ENCODE measurements at regions of chr9 and their contacts with region 1.

Region 1: DNA sequence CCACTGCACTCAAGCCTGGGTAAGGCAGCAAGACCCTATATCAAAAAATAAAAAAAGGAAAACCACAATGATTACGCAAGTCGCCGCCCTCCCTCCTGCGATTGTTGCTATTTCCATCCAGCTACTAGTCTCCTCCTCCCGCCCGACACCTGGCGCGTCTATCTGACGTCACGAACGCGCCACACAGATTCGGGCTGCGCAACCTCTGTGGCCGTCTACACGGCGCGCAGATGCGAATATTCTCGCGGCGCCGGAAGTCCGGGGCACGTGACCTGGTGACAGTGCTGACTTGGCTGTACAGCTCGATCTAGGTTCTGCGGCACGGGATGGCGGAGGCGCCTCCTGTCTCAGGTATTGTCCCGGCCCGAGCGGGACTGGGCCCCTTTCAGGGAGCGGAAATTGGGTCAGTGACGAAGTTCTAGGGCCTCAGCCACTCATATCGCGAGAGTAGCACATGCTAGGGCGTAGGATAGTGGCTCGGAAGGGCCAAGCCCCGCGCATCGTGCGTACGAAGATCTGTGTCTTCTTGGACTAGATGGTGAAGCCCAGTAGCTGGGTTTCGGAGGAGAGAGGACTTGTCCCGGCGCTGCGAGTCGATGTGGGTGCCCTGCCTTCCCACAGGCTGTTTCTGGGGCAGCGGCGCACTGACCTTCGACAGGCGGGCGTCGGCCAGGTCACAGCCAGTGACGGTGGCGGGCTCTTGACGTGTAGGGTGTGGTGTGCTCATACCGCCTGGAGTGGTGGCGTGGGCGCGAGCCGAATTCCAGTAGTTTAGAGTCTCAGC is at the start of gene NFX1:
- DNase-seq: peak; percentile 95
- CTCF ChIP-seq: no peak

Region 2: DNA sequence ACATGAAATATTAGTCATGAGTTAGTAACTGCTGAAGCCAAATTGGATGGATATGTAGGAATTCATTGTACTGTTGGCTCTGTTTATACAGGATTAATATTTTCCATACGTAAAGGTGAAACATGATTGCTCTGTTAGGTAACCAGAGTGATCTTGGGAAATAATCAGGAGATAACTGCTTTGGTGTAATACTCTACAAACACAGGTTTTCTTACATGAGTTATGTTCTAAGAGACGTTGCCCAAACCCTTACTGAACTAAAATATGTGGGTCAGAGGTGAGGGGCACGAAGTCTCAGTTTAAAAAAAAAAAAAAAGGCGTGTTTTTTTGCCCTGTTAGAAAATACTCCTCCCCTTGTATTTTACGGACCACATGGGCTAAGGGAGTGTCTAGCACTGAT is 257.6 kb before region 1 on chr9:
- CTCF ChIA-PET with region 1: no interaction called
- POLR2A ChIA-PET with region 1: no interaction called
- DNase-seq: no peak
- CTCF ChIP-seq: no peak

Region 3: DNA sequence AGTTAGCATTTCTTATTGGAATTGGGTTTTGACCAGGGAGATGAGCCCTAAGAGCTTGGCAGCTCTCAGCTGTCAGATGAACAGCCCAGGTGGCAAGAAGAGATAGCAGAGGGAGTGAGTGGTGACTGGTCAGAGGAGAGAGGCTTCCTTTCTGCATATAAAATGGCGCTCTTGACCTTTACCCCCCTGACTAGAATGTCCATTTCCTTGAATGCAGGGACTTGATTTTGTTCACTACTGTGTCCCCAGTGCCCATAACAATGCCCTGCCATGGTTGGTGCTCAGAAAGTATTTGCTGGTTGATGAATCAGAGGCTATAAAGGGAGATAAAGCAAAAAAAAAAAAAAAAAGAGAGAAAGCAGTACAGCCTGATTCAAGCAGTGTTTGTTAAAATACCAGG is 18.4 kb before region 1 on chr9:
- CTCF ChIA-PET with region 1: interaction called, 53 read pairs
- POLR2A ChIA-PET with region 1: no interaction called
- DNase-seq: no peak
- CTCF ChIP-seq: no peak

Region 4: DNA sequence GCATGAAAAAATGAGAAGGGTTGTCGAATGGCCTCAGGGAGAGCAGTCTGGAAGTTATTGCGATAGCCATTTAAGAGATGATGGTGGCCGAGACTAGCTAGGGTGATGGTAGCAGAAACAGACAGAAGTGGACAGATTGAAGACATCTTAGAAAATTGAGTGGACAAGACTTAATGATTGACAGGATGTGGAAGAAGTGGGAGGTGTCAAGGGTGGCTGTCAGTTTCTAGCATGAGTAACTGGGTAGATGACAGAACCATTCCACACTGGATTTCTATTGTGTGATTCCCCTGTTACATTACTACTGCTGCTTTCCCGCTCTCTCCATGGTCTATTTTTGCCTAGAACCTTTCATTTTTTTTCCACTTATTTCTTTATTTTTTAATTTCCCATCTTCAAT is 13.0 kb before region 1 on chr9:
- CTCF ChIA-PET with region 1: interaction called, 53 read pairs
- POLR2A ChIA-PET with region 1: interaction called, 14 read pairs
- DNase-seq: peak; percentile 18
- CTCF ChIP-seq: no peak

Region 5: GRCh38 chr9:33466565-33467495 is 176.4 kb after region 1 on chr9:
- CTCF ChIA-PET with region 1: interaction called, 23 read pairs
- POLR2A ChIA-PET with region 1: interaction called, 3 read pairs
- DNase-seq: peak; percentile 83
- CTCF ChIP-seq: peak; percentile 94

Region 6: DNA sequence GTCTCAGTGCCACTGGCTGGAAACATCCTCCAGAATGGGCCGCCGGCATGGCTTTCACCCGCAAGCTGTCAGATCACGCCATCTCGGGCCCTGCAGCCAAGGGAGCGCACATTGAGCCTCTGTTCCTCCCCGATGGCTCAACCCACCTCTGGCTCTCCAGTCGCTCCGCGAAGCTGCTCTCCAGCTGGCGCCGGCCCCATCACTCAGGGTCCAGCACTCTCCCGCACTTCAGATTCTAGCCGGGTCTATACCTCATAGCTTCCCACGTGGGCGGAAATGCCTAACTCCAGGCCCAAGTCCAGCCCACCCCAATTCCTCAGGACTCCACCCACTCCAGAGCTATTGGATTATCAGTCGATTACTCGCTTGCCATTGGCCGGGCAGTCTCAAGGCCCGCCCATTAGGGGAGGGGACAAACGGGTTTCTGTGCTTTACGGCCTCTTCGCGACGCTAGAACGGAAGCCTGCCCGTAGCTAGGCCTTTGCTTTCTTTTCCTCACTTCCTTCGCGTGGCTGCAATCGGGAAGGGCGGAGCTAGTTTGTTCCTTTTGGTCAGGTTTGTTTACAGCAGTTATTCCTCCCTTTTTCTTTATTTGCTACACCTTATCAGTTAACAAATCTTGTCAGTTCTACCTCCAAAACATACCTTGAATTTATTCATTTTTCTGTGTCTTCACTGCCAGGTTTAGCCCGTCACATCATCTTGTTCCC is 183.4 kb after region 1 on chr9 and contains the start of gene NOL6:
- CTCF ChIA-PET with region 1: interaction called, 11 read pairs
- POLR2A ChIA-PET with region 1: interaction called, 14 read pairs
- DNase-seq: peak; percentile 98
- CTCF ChIP-seq: no peak